K562 (cell line): ENCODE measurements at regions of chr4 and their contacts with region 1.

Region 1: GRCh38 chr4:164337219-164337944 is 416.5 kb upstream of the SMIM31 start:
- DNase-seq: no peak
- ATAC-seq: no peak
- H3K4me3 ChIP-seq: no peak overlapping the region
- H3K27ac ChIP-seq: no peak overlapping the region
- H3K4me1 ChIP-seq: no peaks in the 10 kb centered on the region
- H3K27me3 ChIP-seq: no peaks in the 10 kb centered on the region
- CTCF ChIP-seq: no peak
- EP300 ChIP-seq: no peak
- POLR2A ChIP-seq: no peak
- RAD21 ChIP-seq: no peak

Region 2: GRCh38 chr4:164368894-164369293 is 31.5 kb after region 1 on chr4:
- CTCF ChIA-PET with region 1: no interaction called
- POLR2A ChIA-PET with region 1: no interaction called
- in situ Hi-C with region 1: no loop called
- intact Hi-C with region 1: loop called (anchors 2 kb)
- DNase-seq: no peak
- ATAC-seq: no peak
- H3K4me3 ChIP-seq: no peak overlapping the region
- H3K27ac ChIP-seq: no peak overlapping the region
- H3K4me1 ChIP-seq: no peaks in the 10 kb centered on the region
- H3K27me3 ChIP-seq: no peaks in the 10 kb centered on the region
- CTCF ChIP-seq: no peak
- EP300 ChIP-seq: no peak
- POLR2A ChIP-seq: no peak
- RAD21 ChIP-seq: no peak